MCF 10A (cell line): ENCODE measurements at regions of chr1 and their contacts with region 1.

Region 1: GRCh38 chr1:210143465-210144062 is 89.0 kb upstream of the SERTAD4 start:
- DNase-seq: peak; percentile 89
- H3K4me3 Mint-ChIP-seq: no peak overlapping the region
- H3K27ac Mint-ChIP-seq: no peak overlapping the region
- H3K4me1 Mint-ChIP-seq: no peaks in the 10 kb centered on the region
- H3K27me3 Mint-ChIP-seq: peaks cover 32% of the 10 kb centered on the region
- CTCF ChIP-seq: peak; percentile 91

Region 2: GRCh38 chr1:208628022-208628914 is 1515.3 kb before region 1 on chr1:
- CTCF ChIA-PET with region 1: no interaction called
- POLR2A ChIA-PET with region 1: no interaction called
- intact Hi-C with region 1: no loop called
- DNase-seq: no peak
- H3K4me3 Mint-ChIP-seq: no peak overlapping the region
- H3K27ac Mint-ChIP-seq: no peak overlapping the region
- H3K4me1 Mint-ChIP-seq: no peaks in the 10 kb centered on the region
- H3K27me3 Mint-ChIP-seq: no peaks in the 10 kb centered on the region
- CTCF ChIP-seq: no peak

Region 3: DNA sequence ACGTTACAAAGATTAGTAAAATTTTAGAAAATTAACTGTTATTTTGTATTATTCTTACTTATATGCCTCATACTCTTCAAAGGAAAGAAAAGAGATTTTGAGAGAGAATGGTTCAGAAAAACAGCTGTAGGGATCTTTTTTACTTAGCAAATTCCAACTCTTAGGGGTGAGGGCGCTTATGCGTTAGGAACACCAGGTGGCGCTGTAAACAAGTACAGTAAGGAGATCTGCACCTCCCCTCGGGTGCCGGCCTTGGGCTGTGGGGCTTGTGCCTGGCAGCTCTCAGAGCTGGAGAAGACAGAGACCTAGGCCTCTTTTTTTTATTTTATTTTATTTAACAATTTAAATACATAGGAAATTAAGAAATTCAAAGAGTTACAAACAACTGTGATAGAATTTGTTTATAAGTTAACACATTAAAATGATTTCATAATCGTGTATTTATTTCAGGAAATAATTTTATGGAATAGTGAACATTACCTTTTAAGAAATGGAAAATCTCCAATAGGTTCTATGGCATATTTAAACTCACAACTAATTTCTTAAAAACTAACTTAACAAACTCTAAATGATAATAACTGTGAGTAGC is 283.2 kb before region 1 on chr1:
- CTCF ChIA-PET with region 1: interaction called, 4 read pairs
- POLR2A ChIA-PET with region 1: no interaction called
- intact Hi-C with region 1: loop called (anchors 5 kb)
- DNase-seq: peak; percentile 94
- H3K4me3 Mint-ChIP-seq: no peak overlapping the region
- H3K27ac Mint-ChIP-seq: peak overlapping the region; percentile 73
- H3K4me1 Mint-ChIP-seq: peaks cover 43% of the 10 kb centered on the region
- H3K27me3 Mint-ChIP-seq: no peaks in the 10 kb centered on the region
- CTCF ChIP-seq: peak; percentile 99

Region 4: GRCh38 chr1:210132582-210132981 is 11.0 kb before region 1 on chr1:
- CTCF ChIA-PET with region 1: interaction called, 20 read pairs
- POLR2A ChIA-PET with region 1: interaction called, 3 read pairs
- intact Hi-C with region 1: no loop called
- DNase-seq: peak; percentile 69
- H3K4me3 Mint-ChIP-seq: no peak overlapping the region
- H3K27ac Mint-ChIP-seq: no peak overlapping the region
- H3K4me1 Mint-ChIP-seq: no peaks in the 10 kb centered on the region
- H3K27me3 Mint-ChIP-seq: peaks cover 42% of the 10 kb centered on the region
- CTCF ChIP-seq: no peak

Region 5: DNA sequence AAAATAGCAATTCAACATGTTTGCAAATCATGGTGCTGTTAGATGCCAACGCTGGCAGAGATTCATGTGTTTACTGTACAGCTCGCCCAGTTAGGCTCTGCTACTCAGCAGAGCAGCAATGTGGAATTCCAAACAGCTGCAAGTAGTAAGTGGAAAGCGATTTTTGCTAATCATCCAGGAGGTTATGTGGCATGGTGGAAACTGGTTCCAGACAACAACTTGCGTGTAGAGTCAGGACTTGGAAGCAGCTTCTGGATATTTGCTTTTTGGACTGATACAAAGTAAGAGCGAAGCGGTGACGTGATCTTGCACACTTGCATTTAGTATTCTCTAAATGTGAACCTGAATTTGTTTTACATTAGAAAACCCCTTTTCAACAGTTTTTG is 158.0 kb after region 1 on chr1:
- CTCF ChIA-PET with region 1: interaction called, 291 read pairs
- POLR2A ChIA-PET with region 1: interaction called, 4 read pairs
- intact Hi-C with region 1: no loop called
- DNase-seq: no peak
- H3K4me3 Mint-ChIP-seq: no peak overlapping the region
- H3K27ac Mint-ChIP-seq: no peak overlapping the region
- H3K4me1 Mint-ChIP-seq: peaks cover 12% of the 10 kb centered on the region
- H3K27me3 Mint-ChIP-seq: peaks cover 20% of the 10 kb centered on the region
- CTCF ChIP-seq: no peak

Region 6: DNA sequence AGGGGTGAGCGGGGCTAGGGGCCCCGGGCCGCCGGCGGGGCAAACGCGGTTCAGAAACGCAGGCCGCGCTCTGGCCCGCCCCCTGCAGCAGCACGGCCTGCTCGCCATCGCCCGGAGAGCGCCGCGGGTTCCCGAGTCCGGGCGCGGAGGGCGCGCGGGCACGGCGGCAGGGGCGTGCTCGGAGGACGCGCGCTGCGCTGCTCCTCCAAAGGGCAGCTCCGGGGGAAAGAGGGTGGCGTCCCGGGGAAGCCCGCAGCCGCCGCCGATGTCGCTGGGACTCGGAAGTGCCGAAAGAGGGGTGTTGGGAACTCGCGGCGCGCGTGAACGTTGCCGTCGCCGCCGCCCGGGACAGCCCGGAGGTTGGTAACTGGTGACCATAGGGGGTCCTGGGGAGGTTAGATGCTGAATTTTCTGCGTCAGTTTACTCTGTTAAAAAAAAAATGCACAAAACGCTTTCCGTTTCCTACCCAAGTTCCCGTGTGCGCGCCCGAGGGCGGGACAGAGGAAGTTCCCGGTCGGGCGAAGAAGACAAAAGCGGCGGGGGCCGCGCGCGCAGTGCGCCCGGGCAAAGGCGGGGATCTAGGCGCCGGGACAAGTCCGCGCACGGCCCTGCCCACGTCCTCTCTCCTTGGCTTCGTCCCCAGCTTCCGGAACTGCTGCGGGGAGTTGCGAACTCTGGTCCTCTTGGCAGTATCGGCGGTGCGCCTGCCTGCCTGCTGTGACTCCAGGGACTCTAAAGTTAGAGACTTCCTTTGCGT is 185.4 kb after region 1 on chr1 and contains the start of gene HHAT:
- CTCF ChIA-PET with region 1: interaction called, 15 read pairs
- POLR2A ChIA-PET with region 1: interaction called, 3 read pairs
- intact Hi-C with region 1: no loop called
- DNase-seq: peak; percentile 95
- H3K4me3 Mint-ChIP-seq: peak within 1 kb of the TSS; percentile 81
- H3K27ac Mint-ChIP-seq: peak within 1 kb of the TSS; percentile 87
- H3K4me1 Mint-ChIP-seq: peaks cover 26% of the 10 kb centered on the region
- H3K27me3 Mint-ChIP-seq: no peaks in the 10 kb centered on the region
- CTCF ChIP-seq: no peak
- total RNA-seq, gene HHAT: 4.6 and 4.9 TPM in 2 replicates

Region 7: GRCh38 chr1:210400043-210400840 is 256.7 kb after region 1 on chr1:
- CTCF ChIA-PET with region 1: interaction called, 59 read pairs
- POLR2A ChIA-PET with region 1: no interaction called
- intact Hi-C with region 1: loop called (anchors 1 kb)
- DNase-seq: peak; percentile 88
- H3K4me3 Mint-ChIP-seq: no peak overlapping the region
- H3K27ac Mint-ChIP-seq: no peak overlapping the region
- H3K4me1 Mint-ChIP-seq: peaks cover 7% of the 10 kb centered on the region
- H3K27me3 Mint-ChIP-seq: no peaks in the 10 kb centered on the region
- CTCF ChIP-seq: peak; percentile 98